Activated B cell treated with CpG ODN at 0.5 μM for 24 hours (primary cell): ENCODE measurements at regions of chr14 and their contacts with region 1.

Region 1: DNA sequence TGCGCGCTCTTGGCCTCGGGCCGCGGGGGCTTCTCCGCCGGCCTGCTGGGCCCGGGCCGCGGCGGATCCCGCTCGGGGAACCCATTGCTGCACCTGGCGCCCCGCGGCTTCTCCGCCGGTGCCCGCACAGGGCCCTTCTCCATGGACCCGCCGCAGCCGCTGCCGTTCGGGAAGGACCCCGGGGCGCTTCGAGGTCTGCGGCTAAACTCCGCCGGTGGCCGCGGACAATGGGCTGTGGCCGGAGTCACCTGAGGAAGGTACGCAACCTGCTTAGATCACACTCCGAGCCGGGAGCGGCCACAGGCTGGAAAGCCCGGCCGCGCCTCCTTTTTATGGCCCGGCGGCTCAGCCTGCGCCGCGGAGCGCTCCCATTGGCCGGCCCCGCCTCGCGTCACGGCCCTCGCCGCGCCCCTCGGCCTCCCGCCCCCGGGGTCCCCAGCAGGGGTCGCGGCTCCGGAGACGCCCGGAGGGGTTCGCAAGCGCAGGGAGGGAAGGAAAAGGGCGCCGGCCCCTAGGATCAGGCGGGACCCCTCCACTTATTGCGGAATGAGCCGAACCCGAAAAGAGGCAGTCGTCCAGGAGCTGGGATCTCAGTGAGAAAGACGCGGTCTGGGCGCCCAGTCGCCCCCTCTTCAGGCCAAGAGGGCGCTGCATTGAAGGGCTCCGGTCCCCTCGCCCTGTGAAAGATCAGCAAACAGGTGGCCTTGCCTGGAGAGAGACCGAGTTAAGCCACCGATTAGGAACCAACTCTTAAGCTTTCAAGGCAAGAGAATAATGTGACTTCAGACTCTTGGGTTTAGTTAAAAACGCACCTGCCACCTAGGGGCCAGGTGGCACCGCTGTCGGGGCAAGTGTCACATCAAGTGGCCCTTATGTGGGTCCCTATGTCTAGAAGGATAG is at the start of gene GCH1:
- DNase-seq: peak; percentile 85
- ATAC-seq: peak; percentile 87
- H3K4me3 Mint-ChIP-seq: peak within 1 kb of the TSS; percentile 89
- H3K27ac Mint-ChIP-seq: peak within 1 kb of the TSS; percentile 90
- H3K4me1 Mint-ChIP-seq: peaks cover 14% of the 10 kb centered on the region
- H3K27me3 Mint-ChIP-seq: no peaks in the 10 kb centered on the region
- CTCF ChIP-seq: no peak
- total RNA-seq, gene GCH1: 15.5 and 17.2 TPM in 2 replicates

Region 2: DNA sequence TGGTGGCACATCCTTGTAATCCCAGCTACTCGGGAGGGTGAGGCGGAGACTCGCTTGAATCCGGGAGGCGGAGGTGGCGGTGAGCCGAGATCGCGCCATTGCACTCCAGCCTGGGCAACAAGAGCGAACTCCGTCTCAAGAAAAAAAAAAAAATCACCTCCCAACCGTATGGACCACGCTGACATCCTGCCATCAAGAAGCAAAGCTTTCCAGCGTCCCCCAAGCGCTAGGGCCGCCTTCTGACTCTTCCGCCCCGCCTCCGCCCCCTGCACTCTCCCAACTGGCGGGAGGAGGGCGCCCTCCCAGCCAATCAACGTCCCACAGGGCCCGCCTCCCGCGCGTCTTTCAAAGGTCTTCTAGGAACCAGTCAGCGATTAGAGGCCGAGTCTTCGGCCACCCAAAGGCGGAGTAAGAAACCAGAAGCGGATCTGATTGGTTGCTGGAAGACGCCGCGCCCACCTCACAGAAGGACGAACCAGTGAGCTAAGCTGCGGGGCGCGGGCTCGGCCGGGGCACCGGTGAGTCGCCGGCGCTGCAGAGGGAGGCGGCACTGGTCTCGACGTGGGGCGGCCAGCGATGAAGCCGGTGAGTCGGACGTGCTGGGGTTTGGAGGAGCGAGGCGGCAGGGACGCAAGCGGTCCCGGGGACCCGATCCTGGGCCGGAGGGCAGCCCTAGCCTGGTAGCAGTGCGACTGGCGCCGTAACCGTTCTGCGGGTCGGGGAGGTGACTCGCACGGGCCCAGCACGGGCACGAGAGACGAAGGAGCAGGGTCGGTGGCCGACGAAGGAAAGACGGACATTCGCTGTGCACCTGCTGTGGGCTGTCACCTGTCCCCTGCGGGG is 506.1 kb before region 1 on chr14 and contains the start of gene CDKN3:
- CTCF ChIA-PET with region 1: no interaction called
- POLR2A ChIA-PET with region 1: no interaction called
- intact Hi-C with region 1: loop called (anchors 2 kb)
- DNase-seq: peak; percentile 94
- ATAC-seq: peak; percentile 94
- H3K4me3 Mint-ChIP-seq: peak within 1 kb of the TSS; percentile 86
- H3K27ac Mint-ChIP-seq: peak within 1 kb of the TSS; percentile 82
- H3K4me1 Mint-ChIP-seq: peaks cover 23% of the 10 kb centered on the region
- H3K27me3 Mint-ChIP-seq: no peaks in the 10 kb centered on the region
- CTCF ChIP-seq: no peak
- total RNA-seq, gene CDKN3: 0.91 and 1.6 TPM in 2 replicates

Region 3: DNA sequence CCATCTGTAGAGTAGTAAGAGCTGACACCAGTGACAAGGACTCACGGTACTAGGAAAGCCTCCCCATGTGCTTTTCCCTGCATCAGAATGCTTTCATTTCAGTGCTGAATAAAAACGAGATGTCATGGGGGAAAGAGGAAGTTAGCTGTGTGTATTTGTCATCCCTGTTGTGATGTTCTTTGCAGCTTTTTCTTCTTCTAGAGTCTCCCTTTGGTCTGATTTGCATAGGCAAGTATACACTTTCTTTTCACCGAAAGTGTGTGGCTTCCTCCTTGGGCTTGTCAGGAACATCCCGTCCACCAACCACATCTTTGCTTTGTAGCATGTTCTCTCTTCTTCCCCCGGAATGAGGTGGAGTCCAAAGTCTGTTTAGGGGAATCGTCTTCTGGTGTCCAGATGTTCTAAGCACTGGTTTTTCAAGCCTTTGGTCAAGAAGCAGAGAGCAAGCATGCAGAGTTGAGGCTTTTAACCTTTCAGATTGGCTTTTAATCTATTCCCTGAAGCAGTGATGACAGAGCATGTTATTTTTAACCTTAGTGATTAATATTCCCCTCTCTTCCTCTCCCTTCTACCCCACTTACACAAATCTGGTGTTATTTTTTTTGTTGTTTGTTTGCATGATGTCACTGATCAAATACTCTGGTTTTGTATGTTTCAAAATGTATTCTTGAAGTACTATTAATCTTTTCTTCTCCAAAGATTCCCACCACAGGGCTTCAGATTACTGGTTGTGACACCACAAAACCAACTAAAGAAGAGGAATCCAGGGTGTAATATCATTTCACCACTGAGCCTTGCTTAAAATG is 172.4 kb before region 1 on chr14:
- CTCF ChIA-PET with region 1: no interaction called
- POLR2A ChIA-PET with region 1: no interaction called
- intact Hi-C with region 1: loop called (anchors 5 kb)
- DNase-seq: no peak
- ATAC-seq: peak; percentile 90
- H3K4me3 Mint-ChIP-seq: peak overlapping the region; percentile 78
- H3K27ac Mint-ChIP-seq: peak overlapping the region; percentile 88
- H3K4me1 Mint-ChIP-seq: peaks cover 22% of the 10 kb centered on the region
- H3K27me3 Mint-ChIP-seq: no peaks in the 10 kb centered on the region
- CTCF ChIP-seq: no peak

Region 4: GRCh38 chr14:54829455-54830224 is 73.1 kb before region 1 on chr14:
- CTCF ChIA-PET with region 1: no interaction called
- POLR2A ChIA-PET with region 1: no interaction called
- intact Hi-C with region 1: no loop called
- DNase-seq: no peak
- ATAC-seq: no peak
- H3K4me3 Mint-ChIP-seq: no peak overlapping the region
- H3K27ac Mint-ChIP-seq: no peak overlapping the region
- H3K4me1 Mint-ChIP-seq: no peaks in the 10 kb centered on the region
- H3K27me3 Mint-ChIP-seq: no peaks in the 10 kb centered on the region
- CTCF ChIP-seq: no peak

Region 5: GRCh38 chr14:54840798-54841197 is 62.0 kb before region 1 on chr14:
- CTCF ChIA-PET with region 1: no interaction called
- POLR2A ChIA-PET with region 1: no interaction called
- intact Hi-C with region 1: no loop called
- DNase-seq: no peak
- ATAC-seq: no peak
- H3K4me3 Mint-ChIP-seq: no peak overlapping the region
- H3K27ac Mint-ChIP-seq: no peak overlapping the region
- H3K4me1 Mint-ChIP-seq: no peaks in the 10 kb centered on the region
- H3K27me3 Mint-ChIP-seq: no peaks in the 10 kb centered on the region
- CTCF ChIP-seq: no peak

Region 6: GRCh38 chr14:54857830-54858269 is 44.9 kb before region 1 on chr14:
- CTCF ChIA-PET with region 1: interaction called, 4 read pairs
- POLR2A ChIA-PET with region 1: interaction called, 8 read pairs
- intact Hi-C with region 1: loop called (anchors 2 kb)
- DNase-seq: no peak
- ATAC-seq: peak; percentile 93
- H3K4me3 Mint-ChIP-seq: peak overlapping the region; percentile 15
- H3K27ac Mint-ChIP-seq: peak overlapping the region; percentile 50
- H3K4me1 Mint-ChIP-seq: peaks cover 50% of the 10 kb centered on the region
- H3K27me3 Mint-ChIP-seq: no peaks in the 10 kb centered on the region
- CTCF ChIP-seq: no peak

Region 7: GRCh38 chr14:55026793-55027561 is 124.2 kb after region 1 on chr14 and contains the starts of genes SOCS4 and WDHD1:
- CTCF ChIA-PET with region 1: interaction called, 4 read pairs
- POLR2A ChIA-PET with region 1: interaction called, 5 read pairs
- intact Hi-C with region 1: loop called (anchors 1 kb)
- DNase-seq: peak; percentile 99
- ATAC-seq: peak; percentile 92
- H3K4me3 Mint-ChIP-seq: peak within 1 kb of the TSS; percentile 95
- H3K27ac Mint-ChIP-seq: peak within 1 kb of the TSS; percentile 92
- H3K4me1 Mint-ChIP-seq: peaks cover 50% of the 10 kb centered on the region
- H3K27me3 Mint-ChIP-seq: no peaks in the 10 kb centered on the region
- CTCF ChIP-seq: no peak
- total RNA-seq, gene SOCS4: 29.2 and 30.3 TPM in 2 replicates
- total RNA-seq, gene WDHD1: 9.3 and 9.5 TPM in 2 replicates

Region 8: GRCh38 chr14:55071870-55072640 is 169.3 kb after region 1 on chr14:
- CTCF ChIA-PET with region 1: no interaction called
- POLR2A ChIA-PET with region 1: interaction called, 5 read pairs
- intact Hi-C with region 1: loop called (anchors 5 kb)
- DNase-seq: peak; percentile 47
- ATAC-seq: peak; percentile 77
- H3K4me3 Mint-ChIP-seq: peak overlapping the region; percentile 79
- H3K27ac Mint-ChIP-seq: peak overlapping the region; percentile 98
- H3K4me1 Mint-ChIP-seq: peaks cover 75% of the 10 kb centered on the region
- H3K27me3 Mint-ChIP-seq: no peaks in the 10 kb centered on the region
- CTCF ChIP-seq: no peak

Region 9: GRCh38 chr14:55097881-55098560 is 195.2 kb after region 1 on chr14:
- CTCF ChIA-PET with region 1: no interaction called
- POLR2A ChIA-PET with region 1: no interaction called
- intact Hi-C with region 1: no loop called
- DNase-seq: no peak
- ATAC-seq: peak; percentile 72
- H3K4me3 Mint-ChIP-seq: peak overlapping the region; percentile 75
- H3K27ac Mint-ChIP-seq: peak overlapping the region; percentile 95
- H3K4me1 Mint-ChIP-seq: peaks cover 42% of the 10 kb centered on the region
- H3K27me3 Mint-ChIP-seq: no peaks in the 10 kb centered on the region
- CTCF ChIP-seq: no peak

Region 10: DNA sequence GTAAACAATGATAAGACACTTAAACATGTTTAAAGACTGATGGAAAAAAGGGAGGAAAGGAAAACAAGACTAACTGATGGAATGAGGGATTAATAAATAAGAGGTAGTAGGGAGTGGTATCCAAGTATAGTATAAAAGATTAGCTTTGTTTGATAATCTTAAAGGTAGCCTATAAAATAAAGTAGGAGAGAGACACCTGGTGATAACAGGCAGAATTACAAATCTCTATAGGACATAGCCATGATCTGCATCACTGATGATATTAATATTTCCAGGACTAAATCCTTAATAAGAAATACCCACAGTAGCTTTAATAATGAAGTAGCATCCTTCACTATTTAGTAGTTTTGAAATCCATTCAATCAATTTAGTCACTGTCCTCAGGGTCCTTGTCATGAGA is 258.2 kb after region 1 on chr14:
- CTCF ChIA-PET with region 1: interaction called, 4 read pairs
- POLR2A ChIA-PET with region 1: interaction called, 20 read pairs
- intact Hi-C with region 1: loop called (anchors 2 kb)
- DNase-seq: no peak
- ATAC-seq: peak; percentile 75
- H3K4me3 Mint-ChIP-seq: no peak overlapping the region
- H3K27ac Mint-ChIP-seq: no peak overlapping the region
- H3K4me1 Mint-ChIP-seq: peaks cover 2% of the 10 kb centered on the region
- H3K27me3 Mint-ChIP-seq: no peaks in the 10 kb centered on the region
- CTCF ChIP-seq: no peak

Region 11: GRCh38 chr14:55904086-55904485 is 1001.3 kb after region 1 on chr14:
- CTCF ChIA-PET with region 1: no interaction called
- POLR2A ChIA-PET with region 1: no interaction called
- intact Hi-C with region 1: no loop called
- DNase-seq: no peak
- ATAC-seq: no peak
- H3K4me3 Mint-ChIP-seq: no peak overlapping the region
- H3K27ac Mint-ChIP-seq: no peak overlapping the region
- H3K4me1 Mint-ChIP-seq: no peaks in the 10 kb centered on the region
- H3K27me3 Mint-ChIP-seq: no peaks in the 10 kb centered on the region
- CTCF ChIP-seq: no peak